ENCODE measurements at regions of chr5 and their contacts with region 1.

Region 1: GRCh38 chr5:53170748-53171349 is 61.3 kb upstream of the MOCS2 start:
- DNase-seq: peak in 1 of 2 experiments; percentile 11
- H3K4me3 ChIP-seq: no peak overlapping the region
- H3K27ac ChIP-seq: no peak overlapping the region
- H3K4me1 ChIP-seq: no peaks in the 10 kb centered on the region
- H3K27me3 ChIP-seq: no peaks in the 10 kb centered on the region
- CTCF ChIP-seq: peak; percentile 81

Region 2: DNA sequence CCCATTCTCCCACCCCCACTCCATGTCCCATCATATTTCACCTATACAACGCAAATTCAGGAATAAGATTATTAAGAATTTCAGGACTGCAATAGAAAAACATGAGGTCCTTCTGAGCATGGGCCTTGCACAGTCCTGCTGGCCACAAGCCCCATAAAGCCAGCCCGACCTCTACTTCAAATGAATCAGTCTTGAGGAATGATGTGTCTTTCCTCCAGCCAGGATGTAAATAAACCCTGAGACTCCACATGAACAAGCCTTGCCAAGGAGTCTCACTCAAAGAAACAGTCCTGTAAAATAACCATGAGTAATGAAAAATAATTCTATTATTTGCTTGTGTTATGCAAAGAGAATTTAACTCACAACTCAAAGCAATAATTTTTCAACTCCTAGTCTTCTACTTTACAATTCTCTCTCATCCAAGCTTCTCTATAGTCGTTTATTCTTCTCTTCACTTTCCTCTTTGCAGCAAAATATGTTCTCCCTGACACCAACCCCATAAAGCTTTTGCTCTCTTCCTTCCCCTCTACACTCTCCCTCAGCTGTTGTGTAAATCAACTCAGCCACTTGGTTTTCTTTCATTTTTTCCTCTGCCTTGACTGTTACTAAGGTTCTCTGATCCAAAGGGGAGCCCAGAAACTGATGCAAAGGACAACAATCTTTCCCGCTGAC is 78.8 kb after region 1 on chr5:
- CTCF ChIA-PET with region 1: no interaction called
- POLR2A ChIA-PET with region 1: interaction called, 5 read pairs
- intact Hi-C with region 1: loop called (anchors 5 kb)
- DNase-seq: peak; percentile 36 to 79
- H3K4me3 ChIP-seq: no peak overlapping the region
- H3K27ac ChIP-seq: peak overlapping the region; percentile 49
- H3K4me1 ChIP-seq: peaks cover 12% of the 10 kb centered on the region
- H3K27me3 ChIP-seq: no peaks in the 10 kb centered on the region
- CTCF ChIP-seq: no peak

Region 3: GRCh38 chr5:53425598-53426511 is 255.0 kb after region 1 on chr5:
- CTCF ChIA-PET with region 1: no interaction called
- POLR2A ChIA-PET with region 1: no interaction called
- intact Hi-C with region 1: loop called (anchors 1 kb)
- DNase-seq: no peak
- H3K4me3 ChIP-seq: no peak overlapping the region
- H3K27ac ChIP-seq: no peak overlapping the region
- H3K4me1 ChIP-seq: 0 out of 2 replicates have a peak, but pooled peaks cover 6% of the 10 kb centered on the region
- H3K27me3 ChIP-seq: no peaks in the 10 kb centered on the region
- CTCF ChIP-seq: peak; percentile 45

Region 4: DNA sequence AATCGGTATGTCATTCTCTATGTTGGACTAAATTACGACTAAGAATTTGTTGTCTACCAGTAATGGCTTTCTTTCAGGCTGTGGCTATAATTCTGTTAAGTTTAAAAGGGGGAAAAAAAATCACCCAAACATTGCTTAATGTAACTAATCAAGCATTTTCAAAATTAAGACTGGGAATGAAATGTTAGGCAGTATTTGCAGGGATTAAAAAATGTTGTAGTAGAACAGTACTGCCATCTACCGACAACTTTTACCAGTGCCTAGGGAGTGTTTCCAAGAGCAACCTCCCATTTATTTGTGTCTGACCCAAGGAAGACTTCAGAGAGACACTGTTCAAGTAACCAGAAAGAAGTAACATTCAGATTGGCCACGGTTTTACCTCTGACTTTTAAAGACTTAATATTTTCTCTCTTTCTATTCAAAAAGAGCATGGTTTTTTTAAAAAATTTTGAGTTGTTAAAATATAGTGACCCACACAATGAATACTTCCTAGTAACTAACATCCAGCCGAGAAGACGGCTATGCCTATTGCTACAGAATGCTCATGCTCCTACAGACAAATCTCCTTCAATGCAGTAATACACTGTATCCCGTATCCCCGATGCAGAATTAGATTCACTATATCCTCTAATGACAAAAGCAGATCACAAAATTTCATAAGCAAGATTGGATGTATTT is 1047.1 kb after region 1 on chr5:
- CTCF ChIA-PET with region 1: no interaction called
- POLR2A ChIA-PET with region 1: no interaction called
- intact Hi-C with region 1: loop called (anchors 5 kb)
- DNase-seq: peak; percentile 2 to 44
- H3K4me3 ChIP-seq: no peak overlapping the region
- H3K27ac ChIP-seq: no peak overlapping the region
- H3K4me1 ChIP-seq: no peaks in the 10 kb centered on the region
- H3K27me3 ChIP-seq: no peaks in the 10 kb centered on the region
- CTCF ChIP-seq: peak; percentile 76

Measured in PC-9 (cell line).